ENCODE measurements at regions of chr19 and their contacts with region 1.

Region 1: GRCh38 chr19:38304866-38305429 is 897 bp downstream of the C19orf33 start:
- DNase-seq: peak; percentile 93
- H3K27ac ChIP-seq: peak overlapping the region; percentile 99
- CTCF ChIP-seq: no peak

Region 2: DNA sequence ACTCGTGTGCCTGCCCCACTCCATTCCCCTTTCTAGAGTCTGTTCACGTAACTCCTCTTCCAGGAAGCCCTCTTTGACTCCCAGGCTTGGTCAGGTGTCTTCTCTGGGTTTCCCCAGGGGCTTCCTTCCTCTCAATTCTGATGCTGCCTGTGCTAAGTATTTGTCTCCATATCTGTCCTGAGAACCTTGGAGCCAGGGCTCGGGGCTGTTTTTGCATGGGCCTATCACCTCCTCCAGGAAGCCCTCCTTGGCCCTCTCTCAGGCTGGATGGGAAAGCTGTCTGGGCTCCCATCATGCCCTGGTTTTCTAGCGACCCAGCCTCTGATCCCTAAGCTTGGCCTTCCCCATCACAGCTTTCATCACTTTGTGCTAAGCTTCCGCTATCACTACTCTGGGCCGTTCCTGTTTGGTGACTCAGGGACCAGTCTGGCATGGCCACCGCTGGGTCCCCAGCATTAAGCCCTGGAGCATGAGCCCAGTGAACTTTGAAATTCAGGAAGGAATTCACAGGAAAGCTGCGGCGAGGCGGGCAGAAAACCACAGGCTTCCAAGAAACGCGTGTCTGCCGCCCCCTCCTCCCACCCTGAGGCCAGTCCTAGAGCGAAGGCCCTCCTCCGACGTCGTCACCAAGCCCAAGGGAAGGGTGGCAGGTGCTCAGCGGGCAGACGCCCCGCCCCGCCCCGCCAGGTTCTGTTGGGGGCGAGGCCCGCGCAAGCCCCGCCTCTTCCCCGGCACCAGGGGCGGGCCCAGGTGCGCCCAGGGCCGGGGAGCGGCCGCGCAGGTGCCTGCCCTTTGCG is 41.1 kb before region 1 on chr19:
- CTCF ChIA-PET with region 1: no interaction called
- POLR2A ChIA-PET with region 1: interaction called, 29 read pairs
- DNase-seq: peak; percentile 95
- H3K27ac ChIP-seq: peak overlapping the region; percentile 96
- CTCF ChIP-seq: no peak